Cardiac septum (tissue), 1 donor: ENCODE measurements at regions of chr10 and their contacts with region 1.

Region 1: GRCh38 chr10:30392564-30392990 is 41.4 kb upstream of the MAP3K8 start:
- DNase-seq: peak; percentile 93

Region 2: DNA sequence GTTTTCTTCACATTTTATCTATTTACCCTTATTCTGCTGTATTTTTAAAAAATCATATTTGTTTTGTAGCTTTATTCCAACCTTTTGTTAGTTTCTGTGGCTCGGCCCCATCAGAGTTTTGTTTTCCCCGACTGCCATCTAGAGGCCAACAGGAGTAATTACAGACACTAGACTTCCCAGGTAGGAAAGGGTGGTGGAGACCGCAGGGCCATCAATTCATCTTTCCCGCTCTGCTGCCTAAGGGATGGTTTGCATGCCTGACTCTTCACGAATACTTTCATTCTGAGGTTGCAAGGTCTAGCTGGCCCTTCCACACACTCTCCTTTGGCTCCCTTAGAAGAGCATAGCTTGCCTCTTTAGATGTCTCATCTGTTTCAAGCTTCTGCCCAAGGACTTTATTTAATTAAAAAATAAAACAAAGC is 198.7 kb after region 1 on chr10:
- intact Hi-C with region 1: loop called (anchors 2 kb)
- DNase-seq: no peak